ENCODE measurements at regions of chr12 and their contacts with region 1.

Region 1: DNA sequence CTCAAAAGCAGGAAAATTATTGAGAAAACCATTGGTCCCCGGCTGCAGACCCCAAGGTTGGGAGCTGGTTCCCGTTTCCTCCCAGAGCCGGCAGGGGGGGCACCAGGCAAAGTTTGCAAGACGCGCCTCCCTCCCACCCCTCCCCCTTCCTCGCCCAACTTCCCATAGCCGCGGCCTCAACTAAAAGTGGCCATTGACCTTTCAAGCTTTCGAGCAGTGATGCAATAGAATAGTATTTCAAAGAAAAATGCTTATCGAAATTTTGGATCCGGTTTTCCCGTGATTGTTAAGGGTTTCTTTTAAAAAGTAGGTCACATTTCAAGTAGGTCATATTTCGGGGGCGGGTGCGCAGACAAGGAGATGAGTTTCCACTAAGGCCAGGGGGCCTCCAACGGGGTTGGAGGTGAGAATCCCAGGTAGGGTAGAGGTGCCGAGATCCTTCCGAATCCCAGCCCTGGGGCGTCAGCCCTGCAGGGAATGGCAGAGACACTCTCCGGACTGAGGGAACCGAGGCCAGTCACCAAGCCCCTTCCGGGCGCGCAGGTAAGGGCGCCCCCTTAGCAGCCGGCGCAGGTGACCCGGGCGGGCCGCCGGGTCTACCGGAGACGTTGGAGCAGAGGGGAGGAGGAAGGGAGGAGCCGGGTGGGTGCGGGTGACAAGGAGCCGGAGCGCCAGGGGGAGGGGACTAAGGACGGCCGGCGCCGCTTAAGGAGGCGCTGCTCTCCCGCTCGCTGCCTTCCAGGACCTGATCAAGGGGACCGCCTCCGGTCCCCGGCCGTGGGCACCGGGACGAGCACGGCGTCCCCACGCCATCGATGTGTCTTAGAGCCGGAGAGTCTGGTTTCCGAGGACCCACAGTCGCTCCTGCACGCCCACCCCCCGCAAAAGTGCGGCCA is 2.6 kb upstream of the SOCS2 start:
- DNase-seq: peak; percentile 49 to 88 (median 68)
- ATAC-seq: peak; percentile 44
- H3K4me3 ChIP-seq: peak overlapping the region; percentile 97
- H3K4me3 Mint-ChIP-seq: peak overlapping the region; percentile 95
- H3K27ac ChIP-seq: peak overlapping the region; percentile 67 to 82
- H3K27ac Mint-ChIP-seq: peak overlapping the region; percentile 86
- H3K4me1 ChIP-seq: peaks cover 43% of the 10 kb centered on the region
- H3K4me1 Mint-ChIP-seq: peaks cover 28% of the 10 kb centered on the region
- H3K27me3 ChIP-seq: no peaks in the 10 kb centered on the region
- H3K27me3 Mint-ChIP-seq: no peaks in the 10 kb centered on the region
- CTCF ChIP-seq: peak; percentile 85

Region 2: DNA sequence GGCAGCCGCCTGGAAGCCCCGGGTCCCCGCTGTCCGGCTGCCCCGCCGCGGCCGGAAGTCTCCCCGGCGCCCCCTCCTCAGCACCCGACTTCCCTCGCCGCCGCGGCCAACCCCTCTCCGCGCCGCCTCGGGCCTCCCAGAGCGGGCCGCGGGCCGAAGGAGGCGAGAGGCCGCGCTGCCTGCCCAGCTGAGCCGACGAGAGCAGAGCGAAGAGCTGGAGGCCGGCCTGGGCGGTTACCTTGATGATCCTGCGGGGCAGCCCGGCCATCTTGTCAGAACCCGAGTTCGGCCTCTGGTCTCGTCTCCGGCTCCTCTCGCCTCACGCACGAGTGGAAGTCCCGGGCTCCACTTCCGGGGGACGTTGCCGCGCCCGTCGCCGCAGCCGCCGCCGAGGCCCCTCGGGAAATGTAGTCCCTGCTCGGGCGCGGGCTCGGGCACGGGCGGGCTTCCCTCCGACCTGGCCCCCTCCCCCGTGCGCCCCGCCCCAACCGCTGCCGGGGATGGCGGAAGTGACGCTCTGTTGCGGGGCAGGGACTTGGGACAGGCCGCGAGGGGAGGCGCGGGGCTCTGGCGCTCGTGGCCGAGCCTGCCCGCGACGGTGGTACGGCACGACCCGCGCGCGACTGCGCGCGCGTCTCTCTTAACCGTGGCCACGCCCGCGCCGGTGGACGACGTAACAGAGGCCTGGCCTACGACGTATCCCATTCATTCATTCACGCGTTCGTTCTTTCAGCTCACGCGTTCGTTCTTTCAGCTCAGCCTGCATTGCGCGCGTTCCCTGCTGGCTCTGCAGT is 128.1 kb before region 1 on chr12 and contains the start of gene UBE2N:
- CTCF ChIA-PET with region 1: no interaction called
- POLR2A ChIA-PET with region 1: no interaction called
- intact Hi-C with region 1: loop called in 1 of 2 experiments (anchors 10 kb)
- DNase-seq: peak; percentile 92 to 98 (median 95)
- ATAC-seq: peak; percentile 81
- H3K4me3 ChIP-seq: peak within 1 kb of the TSS; percentile 76
- H3K4me3 Mint-ChIP-seq: peak within 1 kb of the TSS; percentile 96
- H3K27ac ChIP-seq: peak within 1 kb of the TSS; percentile 89 to 91
- H3K27ac Mint-ChIP-seq: peak within 1 kb of the TSS; percentile 93
- H3K4me1 ChIP-seq: peaks cover 29% of the 10 kb centered on the region
- H3K4me1 Mint-ChIP-seq: peaks cover 53% of the 10 kb centered on the region
- H3K27me3 ChIP-seq: no peaks in the 10 kb centered on the region
- H3K27me3 Mint-ChIP-seq: no peaks in the 10 kb centered on the region
- CTCF ChIP-seq: no peak
- total RNA-seq, gene UBE2N: 89.8 to 101 TPM

Region 3: DNA sequence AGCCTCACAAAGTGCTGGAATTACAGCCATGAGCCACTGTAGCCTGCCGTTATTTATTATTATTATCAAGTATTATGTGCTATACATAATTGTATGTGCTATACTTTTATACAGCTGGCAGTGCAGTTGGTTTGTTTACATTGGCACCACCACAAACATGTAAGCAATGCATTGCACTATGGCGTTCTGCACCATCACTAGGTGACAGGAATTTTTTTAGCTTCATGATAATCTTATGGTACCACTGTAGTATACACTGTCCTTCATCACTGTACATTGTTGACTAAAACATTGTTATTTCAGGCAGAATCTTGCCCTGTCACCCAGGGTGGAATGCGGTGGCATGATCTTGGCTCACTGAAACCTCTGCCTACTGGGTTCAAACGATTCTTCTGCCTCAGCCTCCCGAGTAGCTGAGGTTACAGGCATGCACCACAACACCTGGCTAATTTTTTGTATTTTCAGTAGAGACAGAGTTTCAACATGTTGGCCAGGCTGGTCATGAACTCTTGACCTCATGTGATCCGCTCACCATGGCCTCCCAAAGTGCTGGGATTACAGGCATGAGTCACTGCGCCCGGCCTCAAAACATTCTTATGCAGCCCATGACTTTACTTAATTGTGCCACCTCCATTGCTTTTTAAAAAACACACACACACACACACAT is 85.5 kb before region 1 on chr12:
- CTCF ChIA-PET with region 1: no interaction called
- POLR2A ChIA-PET with region 1: no interaction called
- intact Hi-C with region 1: no loop called
- DNase-seq: no peak
- ATAC-seq: no peak
- H3K4me3 ChIP-seq: no peak overlapping the region
- H3K4me3 Mint-ChIP-seq: no peak overlapping the region
- H3K27ac ChIP-seq: no peak overlapping the region
- H3K27ac Mint-ChIP-seq: no peak overlapping the region
- H3K4me1 ChIP-seq: no peaks in the 10 kb centered on the region
- H3K4me1 Mint-ChIP-seq: no peaks in the 10 kb centered on the region
- H3K27me3 ChIP-seq: no peaks in the 10 kb centered on the region
- H3K27me3 Mint-ChIP-seq: no peaks in the 10 kb centered on the region
- CTCF ChIP-seq: no peak

Region 4: GRCh38 chr12:93742110-93742934 is 172.4 kb after region 1 on chr12:
- CTCF ChIA-PET with region 1: interaction called, 4 read pairs
- POLR2A ChIA-PET with region 1: no interaction called
- intact Hi-C with region 1: loop called in 1 of 2 experiments (anchors 5 kb)
- DNase-seq: peak in 13 of 14 experiments; percentile 5 to 79 (median 41)
- ATAC-seq: peak; percentile 87
- H3K4me3 ChIP-seq: peak overlapping the region; percentile 75
- H3K4me3 Mint-ChIP-seq: peak overlapping the region; percentile 93
- H3K27ac ChIP-seq: peak overlapping the region in 1 of 2 donors; percentile 49
- H3K27ac Mint-ChIP-seq: peak overlapping the region; percentile 71
- H3K4me1 ChIP-seq: peaks cover 10% of the 10 kb centered on the region
- H3K4me1 Mint-ChIP-seq: peaks cover 33% of the 10 kb centered on the region
- H3K27me3 ChIP-seq: no peaks in the 10 kb centered on the region
- H3K27me3 Mint-ChIP-seq: no peaks in the 10 kb centered on the region
- CTCF ChIP-seq: no peak

Region 5: DNA sequence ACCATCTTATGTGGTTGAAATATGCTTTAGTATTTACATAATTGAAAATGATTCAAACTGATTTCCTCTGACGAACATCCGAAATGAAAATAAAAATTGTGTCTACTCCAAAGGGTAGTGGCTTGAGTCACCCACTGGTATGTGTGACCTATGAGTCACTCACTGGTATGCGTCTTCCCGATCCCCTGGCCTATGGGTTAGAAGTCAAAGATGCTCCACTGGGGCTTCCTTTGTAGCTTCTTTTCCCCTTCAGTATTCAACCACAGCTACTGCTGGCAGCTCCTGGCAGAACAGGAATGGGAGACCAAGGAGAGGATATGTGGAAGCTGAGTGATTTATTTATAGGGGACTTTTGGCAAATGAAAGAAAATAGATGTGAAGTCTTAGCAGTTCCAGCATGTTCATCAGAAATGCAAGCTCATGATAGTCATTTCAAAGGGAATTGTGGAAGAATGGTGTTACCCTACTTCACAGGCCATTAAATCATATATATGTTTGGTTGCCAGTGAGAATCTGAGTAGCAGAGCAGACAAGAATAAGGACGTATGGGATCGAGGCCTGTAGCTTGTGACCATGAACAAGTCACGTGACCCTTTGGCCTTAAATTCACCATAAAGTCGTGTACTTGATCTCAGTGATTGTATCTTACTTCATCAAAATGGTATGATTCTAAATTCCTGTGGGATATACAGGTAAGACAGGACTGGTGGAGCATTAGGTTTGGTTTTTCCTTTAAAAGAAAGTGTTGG is 215.5 kb after region 1 on chr12:
- CTCF ChIA-PET with region 1: no interaction called
- POLR2A ChIA-PET with region 1: no interaction called
- intact Hi-C with region 1: loop called in 1 of 2 experiments (anchors 5 kb)
- DNase-seq: peak in 9 of 14 experiments; percentile 10 to 67 (median 27)
- ATAC-seq: peak; percentile 43
- H3K4me3 ChIP-seq: no peak overlapping the region
- H3K4me3 Mint-ChIP-seq: peak overlapping the region; percentile 42
- H3K27ac ChIP-seq: no peak overlapping the region
- H3K27ac Mint-ChIP-seq: peak overlapping the region; percentile 86
- H3K4me1 ChIP-seq: peaks cover 28% of the 10 kb centered on the region
- H3K4me1 Mint-ChIP-seq: peaks cover 65% of the 10 kb centered on the region
- H3K27me3 ChIP-seq: no peaks in the 10 kb centered on the region
- H3K27me3 Mint-ChIP-seq: no peaks in the 10 kb centered on the region
- CTCF ChIP-seq: no peak

Region 6: DNA sequence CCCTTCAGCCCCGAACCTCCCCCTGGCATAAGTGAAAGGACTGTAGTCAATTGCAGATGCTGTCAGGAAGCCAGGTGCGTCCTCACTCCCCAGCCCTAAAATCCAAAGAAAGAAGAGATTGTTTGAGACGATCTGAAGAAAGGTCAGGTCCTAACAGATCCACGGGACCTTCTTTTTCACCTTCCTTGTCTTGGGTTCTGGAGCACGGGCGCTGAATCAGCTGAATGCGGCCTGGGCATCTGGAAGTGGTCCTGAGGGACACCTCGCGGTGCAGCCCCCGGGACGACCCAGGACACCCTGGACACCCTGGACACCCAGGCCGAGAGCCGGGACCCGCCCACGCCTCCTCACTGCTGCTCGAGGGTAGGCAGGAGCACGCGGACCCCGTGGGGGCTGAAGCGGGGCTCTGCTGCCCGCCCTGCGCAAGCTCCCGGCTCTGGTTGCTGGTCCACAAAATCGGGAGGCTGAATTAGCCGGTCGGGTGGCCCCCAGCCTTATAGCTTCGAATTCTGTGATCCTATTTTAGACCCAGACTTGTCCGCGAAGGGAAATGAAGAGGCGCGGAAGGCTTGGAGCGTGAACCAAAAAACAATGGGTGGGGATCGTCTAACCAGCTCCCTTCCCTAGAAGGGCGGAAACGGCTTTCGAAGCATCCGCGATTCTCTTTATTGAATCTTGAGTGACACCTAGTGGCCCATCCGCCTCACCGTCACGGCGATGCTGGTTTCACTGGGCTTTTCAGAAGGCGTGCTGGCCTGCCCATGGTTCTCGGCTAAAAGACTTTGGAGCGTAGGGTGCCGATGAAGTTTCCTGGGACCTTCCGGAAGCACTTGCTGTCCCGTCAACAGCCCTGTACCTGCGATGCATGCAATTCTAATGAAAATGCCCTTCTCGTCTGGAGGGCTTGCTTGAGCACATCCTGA is 532.1 kb after region 1 on chr12:
- CTCF ChIA-PET with region 1: interaction called, 46 read pairs
- POLR2A ChIA-PET with region 1: interaction called, 22 read pairs
- intact Hi-C with region 1: loop called (anchors 1 kb)
- DNase-seq: peak; percentile 73 to 92 (median 79)
- ATAC-seq: peak; percentile 90
- H3K4me3 ChIP-seq: peak overlapping the region; percentile 86
- H3K4me3 Mint-ChIP-seq: peak overlapping the region; percentile 90
- H3K27ac ChIP-seq: peak overlapping the region in 1 of 2 donors; percentile 29
- H3K27ac Mint-ChIP-seq: peak overlapping the region; percentile 43
- H3K4me1 ChIP-seq: peaks cover 19% of the 10 kb centered on the region
- H3K4me1 Mint-ChIP-seq: peaks cover 5% of the 10 kb centered on the region
- H3K27me3 ChIP-seq: no peaks in the 10 kb centered on the region
- H3K27me3 Mint-ChIP-seq: peaks cover 15% of the 10 kb centered on the region
- CTCF ChIP-seq: peak; percentile 70

Region 7: GRCh38 chr12:95003213-95003920 is 1433.5 kb after region 1 on chr12 and contains the start of gene NDUFA12:
- CTCF ChIA-PET with region 1: no interaction called
- POLR2A ChIA-PET with region 1: no interaction called
- intact Hi-C with region 1: loop called in 1 of 2 experiments (anchors 10 kb)
- DNase-seq: peak; percentile 90 to 99 (median 93)
- ATAC-seq: peak; percentile 100
- H3K4me3 ChIP-seq: peak within 1 kb of the TSS; percentile 80
- H3K4me3 Mint-ChIP-seq: peak within 1 kb of the TSS; percentile 96
- H3K27ac ChIP-seq: peak within 1 kb of the TSS; percentile 66 to 76
- H3K27ac Mint-ChIP-seq: peak within 1 kb of the TSS; percentile 87
- H3K4me1 ChIP-seq: peaks cover 29% of the 10 kb centered on the region
- H3K4me1 Mint-ChIP-seq: peaks cover 55% of the 10 kb centered on the region
- H3K27me3 ChIP-seq: no peaks in the 10 kb centered on the region
- H3K27me3 Mint-ChIP-seq: no peaks in the 10 kb centered on the region
- CTCF ChIP-seq: no peak
- total RNA-seq, gene NDUFA12: 43.3 to 43.7 TPM

Measured in CD4-positive, alpha-beta T cell (primary cell).